ENCODE measurements at regions of chr3 and their contacts with region 1.

Region 1: DNA sequence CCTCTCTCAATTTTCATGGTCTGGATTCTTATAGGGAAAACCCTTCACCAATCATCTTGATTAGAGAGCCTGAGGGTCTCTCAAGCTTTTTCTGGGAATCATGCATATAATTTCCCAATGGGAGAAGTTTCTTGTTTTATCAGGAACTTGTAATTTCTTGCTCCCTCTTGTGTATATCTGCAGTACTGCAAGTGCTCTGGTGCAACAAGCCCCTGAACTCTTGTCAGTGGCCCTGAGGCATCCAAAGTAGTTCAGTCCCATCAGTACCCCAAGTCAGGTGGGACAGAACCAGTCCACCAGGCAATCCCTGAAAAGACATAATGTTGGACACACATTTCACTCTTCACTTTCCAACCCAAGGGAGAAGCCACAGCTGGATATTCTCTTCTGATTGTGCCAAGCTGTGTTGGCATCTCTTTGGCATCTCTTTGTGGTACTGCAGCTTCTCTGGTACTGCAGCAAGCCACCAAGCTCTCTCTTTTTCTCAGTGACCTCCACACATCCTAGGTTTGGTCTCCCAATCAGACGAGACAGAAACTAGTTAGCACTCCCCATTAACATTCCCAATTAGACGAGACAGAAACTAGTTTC is 214.5 kb downstream of the ZIC4 start:
- DNase-seq: peak in 3 of 10 donors; percentile 7 to 41 (median 9)

Region 2: DNA sequence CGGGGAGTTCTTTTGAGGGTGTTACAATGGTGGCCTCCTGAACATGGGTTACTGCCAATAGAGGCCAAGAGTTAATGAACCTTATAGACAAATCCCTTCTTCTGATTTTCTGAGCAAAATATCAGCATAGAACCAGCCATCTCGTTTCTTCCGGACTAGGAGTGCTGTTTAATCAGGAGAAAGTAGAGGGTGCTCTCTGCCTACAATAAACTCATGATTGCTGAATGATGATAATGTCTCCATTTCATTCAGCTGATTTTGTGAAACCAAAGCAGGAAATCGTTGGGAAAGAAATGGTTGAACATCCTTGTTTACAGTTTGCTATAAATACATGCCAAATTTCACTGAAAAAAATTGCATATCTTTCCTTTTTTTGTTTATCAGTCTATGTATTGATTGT is 444.0 kb before region 1 on chr3:
- intact Hi-C with region 1: loop called (anchors 10 kb)
- DNase-seq: peak in 1 of 10 donors; percentile 1

Region 3: DNA sequence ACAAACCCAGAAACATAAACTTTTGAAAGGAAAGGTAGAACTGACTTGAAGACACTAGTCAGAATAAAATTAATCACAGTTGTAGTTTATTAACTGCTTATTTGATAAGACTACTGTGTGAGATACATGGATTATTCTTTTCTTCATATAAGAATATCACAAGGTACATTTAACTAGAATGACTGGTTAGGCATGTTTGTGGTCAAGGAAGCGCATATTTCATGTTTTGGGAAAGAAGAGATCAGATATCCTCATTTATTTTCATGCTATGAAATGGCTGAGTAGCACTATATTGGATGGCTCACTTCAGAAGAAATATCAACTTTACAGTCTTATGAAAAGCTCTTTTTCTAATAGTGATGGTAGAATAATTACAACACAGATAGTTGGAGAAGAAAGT is 364.5 kb before region 1 on chr3:
- intact Hi-C with region 1: loop called (anchors 10 kb)
- DNase-seq: no peak

Region 4: DNA sequence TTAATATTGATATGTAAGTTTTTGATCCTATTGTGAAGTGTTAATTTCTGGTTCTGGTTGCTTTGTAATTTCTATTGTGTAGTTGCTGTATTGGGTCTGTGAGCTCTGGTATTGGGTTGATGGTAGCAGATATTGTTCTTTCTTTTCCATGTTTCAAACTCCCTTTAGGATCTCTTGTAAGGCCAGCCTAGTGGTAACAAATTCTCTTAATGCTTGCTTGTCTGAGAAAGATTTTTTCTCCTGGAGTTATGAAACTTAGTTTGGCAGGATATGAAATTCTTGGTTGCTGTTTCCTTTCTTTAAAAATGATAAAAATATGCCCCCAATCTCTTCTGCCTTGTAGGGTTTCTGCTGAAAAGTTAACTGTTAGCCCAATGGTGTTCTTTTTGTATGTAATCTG is 318.1 kb before region 1 on chr3:
- intact Hi-C with region 1: no loop called
- DNase-seq: no peak

Region 5: GRCh38 chr3:147119989-147120388 is 71.9 kb before region 1 on chr3:
- intact Hi-C with region 1: no loop called
- DNase-seq: no peak

Region 6: GRCh38 chr3:147930232-147930807 is 738.4 kb after region 1 on chr3:
- intact Hi-C with region 1: no loop called
- DNase-seq: no peak